WTC11 (cell line): ENCODE measurements at regions of chr10 and their contacts with region 1.

Region 1: GRCh38 chr10:122267849-122268737 is 3.0 kb upstream of the BTBD16 start:
- DNase-seq: peak; percentile 80
- ATAC-seq: peak; percentile 96
- H3K4me3 Mint-ChIP-seq: no peak overlapping the region
- H3K27ac Mint-ChIP-seq: no peak overlapping the region
- H3K4me1 Mint-ChIP-seq: peaks cover 5% of the 10 kb centered on the region
- H3K27me3 Mint-ChIP-seq: no peaks in the 10 kb centered on the region; the same call in 1 of the 2 replicates
- CTCF ChIP-seq: peak; percentile 87

Region 2: DNA sequence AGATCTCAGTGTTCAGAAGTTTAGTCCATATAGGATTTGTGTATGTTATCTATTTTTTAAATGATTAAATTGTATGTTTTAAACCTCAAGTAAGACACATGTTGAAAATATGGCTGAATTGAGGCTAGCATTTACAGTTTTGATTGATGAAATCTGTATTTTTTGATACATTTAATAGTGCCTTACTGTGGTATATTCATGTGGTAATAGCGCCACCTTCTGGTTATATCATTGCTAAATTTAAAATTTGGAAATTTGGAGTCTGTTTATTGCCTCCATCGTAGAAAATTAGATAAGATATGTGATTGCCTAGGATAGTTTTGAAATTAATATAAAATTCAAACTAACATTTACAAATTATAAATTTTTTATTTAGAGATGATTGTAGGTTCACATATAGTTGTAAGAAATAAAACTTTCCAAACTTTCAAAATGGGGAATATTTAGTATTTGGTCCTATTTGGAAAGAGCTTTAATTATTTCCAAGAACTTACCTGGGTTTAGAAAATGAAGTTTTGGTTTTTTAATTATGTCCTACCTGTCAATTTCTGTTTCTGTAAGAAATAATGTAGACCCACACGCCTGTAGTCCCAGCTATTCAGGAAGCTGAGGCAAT is 167.2 kb after region 1 on chr10:
- CTCF ChIA-PET with region 1: interaction called, 10 read pairs
- POLR2A ChIA-PET with region 1: no interaction called
- DNase-seq: no peak
- ATAC-seq: no peak
- H3K4me3 Mint-ChIP-seq: no peak overlapping the region
- H3K27ac Mint-ChIP-seq: no peak overlapping the region
- H3K4me1 Mint-ChIP-seq: no peaks in the 10 kb centered on the region
- H3K27me3 Mint-ChIP-seq: no peaks in the 10 kb centered on the region
- CTCF ChIP-seq: peak; percentile 64

Region 3: GRCh38 chr10:122551450-122551849 is 283.4 kb after region 1 on chr10:
- CTCF ChIA-PET with region 1: no interaction called
- POLR2A ChIA-PET with region 1: no interaction called
- DNase-seq: no peak
- ATAC-seq: peak; percentile 24; the same call in 1 of the 2 replicates
- H3K4me3 Mint-ChIP-seq: no peak overlapping the region
- H3K27ac Mint-ChIP-seq: no peak overlapping the region
- H3K4me1 Mint-ChIP-seq: no peaks in the 10 kb centered on the region
- H3K27me3 Mint-ChIP-seq: no peaks in the 10 kb centered on the region; the same call in 1 of the 2 replicates
- CTCF ChIP-seq: no peak

Region 4: DNA sequence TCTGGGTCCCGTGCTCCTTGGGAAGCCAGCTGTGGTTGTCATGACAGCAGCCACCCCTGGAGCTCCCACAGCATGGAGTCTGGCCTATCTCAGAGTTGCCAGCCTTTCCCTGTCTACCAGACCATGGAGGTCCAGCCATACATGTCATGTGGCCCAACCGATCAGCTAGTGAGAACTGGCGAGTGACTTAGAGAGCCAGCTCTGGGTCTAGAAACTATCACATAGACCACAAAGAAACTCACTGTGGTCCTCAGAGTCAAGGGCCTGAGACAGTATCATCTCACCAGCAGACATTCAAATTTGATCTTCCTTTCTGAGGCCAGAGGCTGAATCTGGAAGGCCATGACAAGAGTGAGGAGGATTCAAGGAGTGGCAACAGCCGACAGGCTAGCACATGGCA is 1174.8 kb after region 1 on chr10:
- CTCF ChIA-PET with region 1: no interaction called
- POLR2A ChIA-PET with region 1: no interaction called
- DNase-seq: no peak
- ATAC-seq: no peak
- H3K4me3 Mint-ChIP-seq: no peak overlapping the region
- H3K27ac Mint-ChIP-seq: no peak overlapping the region
- H3K4me1 Mint-ChIP-seq: no peaks in the 10 kb centered on the region
- H3K27me3 Mint-ChIP-seq: no peaks in the 10 kb centered on the region
- CTCF ChIP-seq: no peak